ENCODE measurements at regions of chr10 and their contacts with region 1.

Region 1: DNA sequence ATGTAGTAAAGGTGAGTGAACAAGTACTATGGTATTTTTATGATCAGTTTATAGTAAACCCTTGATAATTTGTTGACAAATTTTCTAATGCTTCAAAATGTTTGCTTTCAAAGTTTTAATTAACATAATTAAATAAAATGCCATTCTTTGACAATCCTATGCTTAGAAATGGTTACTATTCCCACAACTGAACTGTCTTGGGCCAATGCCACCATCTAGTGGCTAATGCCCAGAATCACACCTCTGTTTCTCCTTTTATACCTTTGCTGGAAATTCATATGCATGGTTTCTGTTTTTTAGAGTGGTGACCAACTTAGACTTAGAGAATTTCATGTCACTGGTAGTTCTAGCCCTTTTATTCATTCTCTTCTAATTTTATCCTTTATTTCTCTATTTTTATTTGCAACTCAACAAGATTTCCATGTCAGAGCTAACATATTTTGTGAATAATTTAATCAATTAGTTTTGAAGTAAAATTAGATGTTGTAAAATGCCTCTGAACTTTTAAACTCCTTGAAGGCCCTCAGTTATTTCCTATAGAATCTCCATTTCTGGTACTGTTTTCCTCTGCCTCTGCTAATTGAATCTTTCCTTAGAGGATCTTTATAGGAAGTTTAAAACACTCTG is 31.1 kb downstream of the PCGF5 start:
- DNase-seq: peak; percentile 14
- H3K4me3 Mint-ChIP-seq: no peak overlapping the region
- H3K27ac Mint-ChIP-seq: no peak overlapping the region
- H3K4me1 Mint-ChIP-seq: peaks cover 3% of the 10 kb centered on the region
- H3K27me3 Mint-ChIP-seq: no peaks in the 10 kb centered on the region

Region 2: DNA sequence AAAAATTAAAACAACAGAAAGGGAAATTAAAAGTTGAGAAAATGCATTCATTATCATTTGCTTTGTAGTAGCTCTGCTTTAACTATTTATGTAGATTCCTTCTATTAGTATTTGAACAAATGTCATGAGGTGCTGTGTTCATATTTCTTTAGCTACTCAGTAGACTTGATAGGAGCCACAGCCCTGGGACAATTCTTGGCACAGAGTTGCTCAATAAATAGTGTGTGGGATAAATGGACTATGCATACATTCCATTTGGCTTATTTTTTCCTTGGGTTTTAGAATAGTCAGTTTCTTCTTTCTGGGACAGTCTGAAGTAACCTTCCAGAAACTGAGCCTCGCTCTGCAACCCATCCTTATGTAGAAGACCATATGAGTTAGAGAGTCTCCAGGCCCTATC is 366.4 kb before region 1 on chr10:
- intact Hi-C with region 1: loop called (anchors 2 kb)
- DNase-seq: no peak
- H3K4me3 Mint-ChIP-seq: no peak overlapping the region
- H3K27ac Mint-ChIP-seq: no peak overlapping the region
- H3K4me1 Mint-ChIP-seq: no peaks in the 10 kb centered on the region
- H3K27me3 Mint-ChIP-seq: no peaks in the 10 kb centered on the region

Region 3: GRCh38 chr10:90912174-90912573 is 339.4 kb before region 1 on chr10:
- intact Hi-C with region 1: loop called (anchors 1 kb)
- DNase-seq: no peak
- H3K4me3 Mint-ChIP-seq: no peak overlapping the region
- H3K27ac Mint-ChIP-seq: no peak overlapping the region
- H3K4me1 Mint-ChIP-seq: peaks cover 7% of the 10 kb centered on the region
- H3K27me3 Mint-ChIP-seq: peaks cover 4% of the 10 kb centered on the region

Region 4: DNA sequence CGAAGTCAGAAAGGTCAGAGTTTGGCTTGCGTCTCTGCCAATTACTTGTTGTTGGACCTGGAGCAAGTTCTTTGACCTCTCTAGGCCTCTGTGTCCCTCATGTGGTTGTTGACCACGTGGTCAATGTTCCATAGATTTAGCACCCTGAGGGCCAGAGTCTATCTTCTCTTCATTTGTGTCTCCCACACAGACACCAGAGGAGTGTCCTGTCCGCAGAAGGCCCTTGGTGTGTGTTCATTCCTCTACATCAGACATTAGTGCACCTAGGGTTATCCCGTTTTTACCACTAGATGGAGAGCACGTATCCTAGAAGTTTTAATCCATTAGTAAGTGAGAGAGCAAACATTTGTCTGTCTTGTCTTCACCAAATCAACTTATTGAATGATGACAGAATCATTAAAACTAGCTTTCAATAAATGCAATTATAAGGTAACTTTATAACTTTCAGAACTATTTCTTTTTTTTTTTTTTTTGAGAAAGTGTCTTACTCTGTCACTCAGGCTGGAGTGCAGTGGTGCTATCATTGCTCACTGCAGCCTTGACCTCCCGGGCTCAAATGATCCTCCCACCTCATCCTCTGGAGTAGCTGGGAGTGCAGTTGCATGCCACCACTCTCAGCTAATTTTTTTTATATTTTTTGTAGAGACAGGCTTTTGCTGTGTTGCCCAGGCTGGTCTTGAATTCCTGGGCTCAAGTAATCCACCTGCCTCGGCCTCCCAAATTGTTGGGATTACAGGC is 208.2 kb before region 1 on chr10:
- intact Hi-C with region 1: loop called (anchors 1 kb)
- DNase-seq: no peak
- H3K4me3 Mint-ChIP-seq: no peak overlapping the region
- H3K27ac Mint-ChIP-seq: no peak overlapping the region
- H3K4me1 Mint-ChIP-seq: no peaks in the 10 kb centered on the region
- H3K27me3 Mint-ChIP-seq: peaks cover 35% of the 10 kb centered on the region

Region 5: DNA sequence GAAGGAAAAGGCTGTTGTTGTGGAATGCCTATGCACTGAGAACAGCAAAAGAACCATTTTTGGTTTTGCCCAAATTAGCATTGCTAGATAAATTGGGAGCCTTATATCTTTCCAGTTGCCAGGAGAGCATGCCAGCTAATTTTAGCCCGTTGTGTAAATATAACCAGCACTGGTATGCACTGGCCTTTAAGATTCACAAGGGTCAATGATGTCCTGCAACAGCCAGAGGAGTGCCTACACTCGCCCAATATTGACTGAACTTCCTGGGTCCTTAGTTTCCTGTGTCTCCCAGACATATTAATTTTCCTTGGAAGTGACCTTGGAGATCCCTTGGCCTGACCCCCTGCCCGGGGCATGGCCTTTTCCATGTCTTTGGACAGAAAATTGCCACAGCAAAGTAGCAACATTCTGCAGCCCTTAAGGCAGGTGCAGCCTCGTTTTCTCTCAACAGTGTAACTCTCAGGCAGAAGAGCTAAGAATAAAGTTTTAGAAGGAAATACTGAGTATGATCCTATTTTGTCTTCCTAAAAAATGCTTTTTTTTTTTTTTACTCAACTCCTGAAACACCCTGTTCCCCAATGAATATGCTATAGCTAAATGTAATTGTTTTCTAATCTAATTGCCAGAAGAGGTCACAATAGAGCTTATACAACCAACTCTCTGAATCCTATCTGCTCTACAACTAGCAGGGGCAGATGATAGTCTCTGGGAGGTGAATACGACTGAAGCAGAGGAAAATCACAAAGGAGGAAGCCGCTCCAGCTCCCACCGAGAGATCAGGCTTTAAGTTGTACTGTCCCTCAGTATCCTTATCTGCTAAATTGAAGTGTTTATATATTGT is 163.0 kb before region 1 on chr10:
- intact Hi-C with region 1: loop called (anchors 1 kb)
- DNase-seq: no peak
- H3K4me3 Mint-ChIP-seq: no peak overlapping the region
- H3K27ac Mint-ChIP-seq: no peak overlapping the region
- H3K4me1 Mint-ChIP-seq: no peaks in the 10 kb centered on the region
- H3K27me3 Mint-ChIP-seq: peaks cover 9% of the 10 kb centered on the region

Region 6: GRCh38 chr10:91163269-91163868 is 88.2 kb before region 1 on chr10:
- intact Hi-C with region 1: loop called (anchors 5 kb)
- DNase-seq: peak; percentile 70
- H3K4me3 Mint-ChIP-seq: peak overlapping the region; percentile 85
- H3K27ac Mint-ChIP-seq: peak overlapping the region; percentile 76
- H3K4me1 Mint-ChIP-seq: peaks cover 34% of the 10 kb centered on the region
- H3K27me3 Mint-ChIP-seq: no peaks in the 10 kb centered on the region

Region 7: GRCh38 chr10:91198781-91199180 is 52.8 kb before region 1 on chr10:
- intact Hi-C with region 1: loop called (anchors 5 kb)
- DNase-seq: no peak
- H3K4me3 Mint-ChIP-seq: peak overlapping the region; percentile 1
- H3K27ac Mint-ChIP-seq: peak overlapping the region; percentile 76
- H3K4me1 Mint-ChIP-seq: peaks cover 73% of the 10 kb centered on the region
- H3K27me3 Mint-ChIP-seq: no peaks in the 10 kb centered on the region

Region 8: DNA sequence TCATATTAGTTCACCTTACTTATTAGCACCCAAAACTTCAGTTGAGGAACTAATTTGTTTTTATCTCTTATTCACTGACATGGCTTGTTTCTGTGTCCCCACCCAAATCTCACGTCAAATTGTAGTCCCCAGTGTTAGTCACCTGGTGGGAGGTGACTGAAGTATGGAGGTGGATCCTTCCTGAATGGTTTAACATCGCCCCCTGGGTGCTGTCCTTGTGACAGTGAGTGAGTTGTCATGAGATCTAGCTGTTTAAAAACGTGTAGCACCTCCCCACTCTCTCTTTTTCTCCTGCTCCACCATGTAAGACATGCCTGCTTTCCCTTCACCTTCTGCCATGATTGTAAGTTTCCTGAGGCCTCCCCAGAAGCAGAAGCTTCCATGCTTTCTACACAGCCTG is 83.6 kb after region 1 on chr10:
- intact Hi-C with region 1: no loop called
- DNase-seq: no peak
- H3K4me3 Mint-ChIP-seq: no peak overlapping the region
- H3K27ac Mint-ChIP-seq: no peak overlapping the region
- H3K4me1 Mint-ChIP-seq: no peaks in the 10 kb centered on the region
- H3K27me3 Mint-ChIP-seq: peaks cover 2% of the 10 kb centered on the region

Measured in activated T-helper 2 cell treated with anti-CD3 and anti-CD28 coated beads, Interferon-gamma antibody, Interleukin-2, Interleukin-4, amounts not matched to agents 10 μg/mL and 5 μg/mL and 100 μg/mL, durations not matched to agents 14 hours and 24 hours and 36 hours (primary cell).